ENCODE measurements at regions of chr18 and their contacts with region 1.

Region 1: DNA sequence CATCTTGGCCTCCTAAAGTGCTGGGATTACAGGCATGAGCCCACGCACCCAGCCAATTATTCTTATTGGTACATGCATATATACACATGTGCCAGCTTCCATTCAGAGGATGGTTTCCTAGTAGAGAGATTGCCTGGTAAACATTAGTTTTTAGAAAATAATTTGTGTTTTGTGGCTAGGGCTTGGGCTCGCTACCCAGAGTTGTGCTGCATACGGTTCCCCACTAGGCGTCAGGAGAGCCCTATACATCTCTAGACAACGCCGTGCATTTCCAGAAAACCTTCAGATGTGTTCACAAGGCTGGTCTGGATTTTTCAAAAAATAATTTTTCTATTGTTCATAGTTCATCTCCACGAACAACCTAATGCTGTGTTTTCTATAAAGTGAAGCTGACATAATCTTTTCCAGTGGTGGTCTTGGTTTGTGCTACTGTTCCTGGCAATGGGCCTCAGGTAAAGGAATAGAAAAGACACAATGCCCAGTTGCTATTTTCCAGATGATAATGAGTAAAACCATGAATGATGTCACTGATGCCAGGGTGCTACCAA is 14.7 kb upstream of the AFG3L2 start:
- DNase-seq: peak; percentile 61 to 64
- H3K4me3 ChIP-seq: no peak overlapping the region
- H3K27ac ChIP-seq: no peak overlapping the region
- H3K4me1 ChIP-seq: no peaks in the 10 kb centered on the region
- H3K27me3 ChIP-seq: no peaks in the 10 kb centered on the region
- CTCF ChIP-seq: peak; percentile 79 to 93 (median 85)
- POLR2A ChIP-seq: no peak

Region 2: GRCh38 chr18:12520442-12520992 is 128.8 kb after region 1 on chr18:
- intact Hi-C with region 1: loop called (anchors 10 kb)
- DNase-seq: no peak
- H3K4me3 ChIP-seq: no peak overlapping the region
- H3K27ac ChIP-seq: no peak overlapping the region
- H3K4me1 ChIP-seq: no peaks in the 10 kb centered on the region
- H3K27me3 ChIP-seq: no peaks in the 10 kb centered on the region
- CTCF ChIP-seq: no peak
- POLR2A ChIP-seq: no peak

Region 3: GRCh38 chr18:12659904-12660605 is 268.4 kb after region 1 on chr18:
- intact Hi-C with region 1: loop called (anchors 2 kb)
- DNase-seq: peak; percentile 52 to 56
- H3K4me3 ChIP-seq: no peak overlapping the region
- H3K27ac ChIP-seq: no peak overlapping the region
- H3K4me1 ChIP-seq: peaks cover 0 to 5% of the 10 kb centered on the region in 2 donors
- H3K27me3 ChIP-seq: no peaks in the 10 kb centered on the region
- CTCF ChIP-seq: peak; percentile 69 to 95 (median 87)
- POLR2A ChIP-seq: no peak

Region 4: GRCh38 chr18:12904012-12904516 is 512.4 kb after region 1 on chr18:
- intact Hi-C with region 1: no loop called
- DNase-seq: no peak
- H3K4me3 ChIP-seq: no peak overlapping the region
- H3K27ac ChIP-seq: no peak overlapping the region
- H3K4me1 ChIP-seq: peaks cover 11 to 20% of the 10 kb centered on the region in 2 donors
- H3K27me3 ChIP-seq: no peaks in the 10 kb centered on the region
- CTCF ChIP-seq: no peak
- POLR2A ChIP-seq: no peak